ENCODE measurements at regions of chr5 and their contacts with region 1.

Region 1: DNA sequence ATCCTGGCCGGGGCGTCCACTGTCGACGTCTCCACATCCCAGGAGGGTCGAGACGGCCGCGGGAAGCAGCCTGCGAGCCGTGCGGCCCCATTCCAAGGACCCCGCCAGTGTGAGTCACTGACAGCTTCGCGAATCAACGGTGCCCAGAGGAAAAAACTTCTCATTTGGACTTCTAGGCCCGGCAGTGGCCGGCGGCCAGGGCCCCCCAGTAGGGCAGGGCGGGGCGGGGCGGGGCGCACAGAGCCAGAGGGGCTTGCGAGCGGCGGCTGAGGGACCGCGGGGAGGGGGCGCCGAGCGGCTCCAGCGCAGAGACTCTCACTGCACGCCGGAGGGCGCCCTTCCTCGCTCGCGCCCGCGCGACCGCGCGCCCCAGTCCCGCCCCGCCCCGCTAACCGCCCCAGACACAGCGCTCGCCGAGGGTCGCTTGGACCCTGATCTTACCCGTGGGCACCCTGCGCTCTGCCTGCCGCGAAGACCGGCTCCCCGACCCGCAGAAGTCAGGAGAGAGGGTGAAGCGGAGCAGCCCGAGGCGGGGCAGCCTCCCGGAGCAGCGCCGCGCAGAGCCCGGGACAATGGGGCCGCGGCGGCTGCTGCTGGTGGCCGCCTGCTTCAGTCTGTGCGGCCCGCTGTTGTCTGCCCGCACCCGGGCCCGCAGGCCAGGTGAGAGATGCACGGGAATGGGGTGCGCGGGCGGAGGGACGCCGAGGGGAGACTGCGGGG is at the start of gene F2R:
- DNase-seq: peak; percentile 23
- ATAC-seq: peak; percentile 77
- H3K4me3 Mint-ChIP-seq: peak within 1 kb of the TSS; percentile 80
- H3K27ac Mint-ChIP-seq: no peak within 1 kb of the TSS
- H3K4me1 Mint-ChIP-seq: peaks cover 25% of the 10 kb centered on the region
- H3K27me3 Mint-ChIP-seq: peaks cover 42% of the 10 kb centered on the region
- CTCF ChIP-seq: no peak
- total RNA-seq, gene F2R: 0.18 and 0.20 TPM in 2 replicates

Region 2: DNA sequence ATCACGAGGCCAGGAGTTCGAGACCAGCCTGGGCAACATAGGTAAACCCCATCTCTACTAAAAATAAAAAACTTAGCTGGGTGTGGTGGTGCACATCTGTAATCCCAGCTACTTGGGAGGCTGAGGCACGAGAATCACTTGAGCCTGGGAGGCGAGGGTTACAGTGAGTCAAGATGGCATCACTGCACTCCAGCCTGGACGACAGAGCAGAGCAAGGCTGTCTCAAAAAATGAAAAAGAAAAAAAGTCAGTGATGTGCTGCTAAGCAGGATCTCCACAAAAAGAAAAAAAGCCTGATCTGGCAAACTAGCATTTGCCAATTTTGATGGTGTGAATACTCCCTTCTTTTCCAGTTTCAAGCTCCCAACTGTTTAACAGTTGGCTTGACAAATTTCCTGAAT is 21.9 kb after region 1 on chr5:
- CTCF ChIA-PET with region 1: no interaction called
- POLR2A ChIA-PET with region 1: interaction called, 3 read pairs
- intact Hi-C with region 1: loop called (anchors 2 kb)
- DNase-seq: no peak
- ATAC-seq: no peak
- H3K4me3 Mint-ChIP-seq: no peak overlapping the region
- H3K27ac Mint-ChIP-seq: no peak overlapping the region
- H3K4me1 Mint-ChIP-seq: peaks cover 7% of the 10 kb centered on the region
- H3K27me3 Mint-ChIP-seq: peaks cover 3% of the 10 kb centered on the region
- CTCF ChIP-seq: no peak

Region 3: GRCh38 chr5:76771705-76772405 is 56.0 kb after region 1 on chr5:
- CTCF ChIA-PET with region 1: interaction called, 7 read pairs
- POLR2A ChIA-PET with region 1: no interaction called
- intact Hi-C with region 1: loop called (anchors 1 kb)
- DNase-seq: no peak
- ATAC-seq: no peak
- H3K4me3 Mint-ChIP-seq: no peak overlapping the region
- H3K27ac Mint-ChIP-seq: no peak overlapping the region
- H3K4me1 Mint-ChIP-seq: peaks cover 2% of the 10 kb centered on the region
- H3K27me3 Mint-ChIP-seq: no peaks in the 10 kb centered on the region
- CTCF ChIP-seq: no peak

Region 4: DNA sequence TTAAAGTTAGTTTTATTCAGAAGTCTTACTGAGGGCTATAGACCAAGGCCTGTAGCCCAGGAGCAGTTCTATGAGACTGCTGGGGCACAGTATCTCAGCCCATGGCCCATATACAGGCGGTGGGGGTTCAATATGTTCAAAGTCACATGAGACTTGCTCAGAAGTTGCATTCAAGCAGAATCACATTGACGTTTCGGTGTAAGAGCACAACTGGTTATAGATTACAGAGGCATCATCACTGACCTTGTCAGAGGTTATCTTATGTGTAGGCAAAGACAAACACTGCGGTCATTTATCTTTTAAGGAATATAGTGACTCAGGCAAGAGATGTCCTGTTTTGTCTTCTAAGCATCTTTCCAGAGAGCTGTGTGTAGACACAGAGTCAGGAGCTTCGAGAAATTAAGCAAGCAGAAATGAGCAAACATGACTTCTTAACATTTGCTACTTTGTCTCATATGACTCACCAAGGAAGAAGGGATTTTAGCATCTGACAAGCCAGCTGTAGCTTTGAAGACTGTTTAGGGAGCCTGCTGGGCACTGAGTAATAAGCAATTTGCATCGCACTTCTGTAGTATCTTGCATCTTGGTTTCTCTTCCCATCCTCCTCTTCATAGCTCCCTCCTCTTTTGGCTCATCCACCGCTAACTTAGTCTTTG is 90.1 kb after region 1 on chr5:
- CTCF ChIA-PET with region 1: no interaction called
- POLR2A ChIA-PET with region 1: no interaction called
- intact Hi-C with region 1: no loop called
- DNase-seq: no peak
- ATAC-seq: no peak
- H3K4me3 Mint-ChIP-seq: no peak overlapping the region
- H3K27ac Mint-ChIP-seq: no peak overlapping the region
- H3K4me1 Mint-ChIP-seq: no peaks in the 10 kb centered on the region
- H3K27me3 Mint-ChIP-seq: peaks cover 17% of the 10 kb centered on the region
- CTCF ChIP-seq: no peak

Measured in activated B cell treated with CpG ODN at 0.5 μM for 24 hours (primary cell).